ENCODE measurements at regions of chr21 and their contacts with region 1.

Region 1: GRCh38 chr21:33441489-33442477 is 38.0 kb downstream of the TMEM50B start:
- DNase-seq: no peak
- ATAC-seq: no peak
- H3K4me3 ChIP-seq: no peak overlapping the region
- H3K4me3 Mint-ChIP-seq: no peak overlapping the region
- H3K27ac ChIP-seq: no peak overlapping the region
- H3K27ac Mint-ChIP-seq: no peak overlapping the region
- H3K4me1 ChIP-seq: no peaks in the 10 kb centered on the region
- H3K4me1 Mint-ChIP-seq: peaks cover 5% of the 10 kb centered on the region
- H3K27me3 ChIP-seq: no peaks in the 10 kb centered on the region
- H3K27me3 Mint-ChIP-seq: no peaks in the 10 kb centered on the region
- CTCF ChIP-seq: no peak

Region 2: GRCh38 chr21:32900814-32901213 is 541.0 kb before region 1 on chr21:
- CTCF ChIA-PET with region 1: no interaction called
- POLR2A ChIA-PET with region 1: no interaction called
- intact Hi-C with region 1: no loop called
- DNase-seq: no peak
- ATAC-seq: no peak
- H3K4me3 ChIP-seq: no peak overlapping the region
- H3K4me3 Mint-ChIP-seq: no peak overlapping the region
- H3K27ac ChIP-seq: no peak overlapping the region
- H3K27ac Mint-ChIP-seq: no peak overlapping the region
- H3K4me1 ChIP-seq: no peaks in the 10 kb centered on the region
- H3K4me1 Mint-ChIP-seq: no peaks in the 10 kb centered on the region
- H3K27me3 ChIP-seq: no peaks in the 10 kb centered on the region
- H3K27me3 Mint-ChIP-seq: peaks cover 14% of the 10 kb centered on the region
- CTCF ChIP-seq: no peak

Region 3: DNA sequence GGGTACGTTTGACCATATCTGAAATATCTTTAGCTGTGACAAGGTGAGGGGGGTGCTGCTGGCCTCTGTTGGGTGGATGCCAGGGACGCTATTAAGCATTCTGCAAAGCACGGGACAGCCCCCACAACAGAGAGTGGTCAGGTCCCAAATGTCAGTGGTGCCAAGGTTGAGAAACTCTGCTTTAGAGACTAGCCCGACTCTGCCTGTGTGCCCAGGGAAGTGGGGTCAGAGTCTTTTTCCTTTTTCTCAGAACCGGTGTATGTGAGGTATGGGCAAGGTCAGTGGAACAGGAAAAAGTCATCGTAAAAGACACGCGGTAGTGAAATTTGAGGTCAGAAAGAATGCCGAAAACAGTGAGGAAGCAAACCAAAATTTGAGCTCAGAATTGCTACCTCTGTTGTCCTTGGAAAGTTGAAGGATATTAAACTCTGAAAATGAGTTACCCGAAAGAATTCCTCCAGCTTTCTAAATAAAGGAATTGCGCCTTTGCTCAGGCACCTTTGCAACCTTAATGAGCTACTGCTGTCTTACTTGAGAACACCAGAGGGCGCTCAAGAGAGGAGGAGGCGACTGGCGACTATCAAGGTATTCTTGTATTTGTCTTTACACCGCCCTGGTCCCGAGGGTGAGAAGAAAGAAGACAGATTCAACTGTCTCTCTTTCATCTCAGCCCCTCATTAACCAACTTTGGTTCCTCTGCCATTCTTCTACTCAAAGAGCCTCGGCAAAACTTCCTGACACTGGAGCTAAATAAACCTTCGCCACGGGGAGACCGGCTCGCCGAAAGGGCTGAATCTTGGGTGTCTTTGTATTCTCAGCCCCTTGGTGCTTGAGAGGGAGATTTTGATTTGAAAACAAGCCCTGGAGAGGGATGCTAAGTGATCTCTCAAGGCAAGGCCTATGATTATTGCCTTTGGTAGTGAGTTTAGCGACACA is 501.4 kb before region 1 on chr21:
- CTCF ChIA-PET with region 1: interaction called, 4 read pairs
- POLR2A ChIA-PET with region 1: no interaction called
- intact Hi-C with region 1: loop called in 1 of 2 experiments (anchors 1 kb)
- DNase-seq: peak in 12 of 14 experiments; percentile 7 to 79 (median 20)
- ATAC-seq: peak; percentile 61
- H3K4me3 ChIP-seq: no peak overlapping the region
- H3K4me3 Mint-ChIP-seq: no peak overlapping the region
- H3K27ac ChIP-seq: no peak overlapping the region
- H3K27ac Mint-ChIP-seq: no peak overlapping the region
- H3K4me1 ChIP-seq: no peaks in the 10 kb centered on the region
- H3K4me1 Mint-ChIP-seq: no peaks in the 10 kb centered on the region
- H3K27me3 ChIP-seq: no peaks in the 10 kb centered on the region
- H3K27me3 Mint-ChIP-seq: no peaks in the 10 kb centered on the region
- CTCF ChIP-seq: peak; percentile 82

Region 4: GRCh38 chr21:33266050-33266788 is 175.6 kb before region 1 on chr21 and contains the start of gene IL10RB:
- CTCF ChIA-PET with region 1: interaction called, 4 read pairs
- POLR2A ChIA-PET with region 1: no interaction called
- intact Hi-C with region 1: loop called in 1 of 2 experiments (anchors 10 kb)
- DNase-seq: peak; percentile 47 to 89 (median 72)
- ATAC-seq: peak; percentile 71
- H3K4me3 ChIP-seq: peak within 1 kb of the TSS; percentile 98
- H3K4me3 Mint-ChIP-seq: peak within 1 kb of the TSS; percentile 99
- H3K27ac ChIP-seq: peak within 1 kb of the TSS; percentile 79 to 85
- H3K27ac Mint-ChIP-seq: peak within 1 kb of the TSS; percentile 94
- H3K4me1 ChIP-seq: peaks cover 62% of the 10 kb centered on the region
- H3K4me1 Mint-ChIP-seq: peaks cover 60% of the 10 kb centered on the region
- H3K27me3 ChIP-seq: no peaks in the 10 kb centered on the region
- H3K27me3 Mint-ChIP-seq: no peaks in the 10 kb centered on the region
- CTCF ChIP-seq: no peak
- total RNA-seq, gene IL10RB: 7.2 to 9.2 TPM

Region 5: DNA sequence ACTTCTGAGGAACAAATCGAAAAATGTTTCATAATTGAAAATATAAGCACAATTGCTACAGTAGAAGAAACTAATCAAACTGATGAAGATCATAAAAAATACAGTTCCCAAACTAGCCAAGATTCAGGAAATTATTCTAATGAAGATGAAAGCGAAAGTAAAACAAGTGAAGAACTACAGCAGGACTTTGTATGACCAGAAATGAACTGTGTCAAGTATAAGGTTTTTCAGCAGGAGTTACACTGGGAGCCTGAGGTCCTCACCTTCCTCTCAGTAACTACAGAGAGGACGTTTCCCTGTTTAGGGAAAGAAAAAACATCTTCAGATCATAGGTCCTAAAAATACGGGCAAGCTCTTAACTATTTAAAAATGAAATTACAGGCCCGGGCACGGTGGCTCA is 86.4 kb before region 1 on chr21:
- CTCF ChIA-PET with region 1: interaction called, 24 read pairs
- POLR2A ChIA-PET with region 1: interaction called, 3 read pairs
- intact Hi-C with region 1: loop called in 1 of 2 experiments (anchors 5 kb)
- DNase-seq: no peak
- ATAC-seq: no peak
- H3K4me3 ChIP-seq: no peak overlapping the region
- H3K4me3 Mint-ChIP-seq: no peak overlapping the region
- H3K27ac ChIP-seq: no peak overlapping the region
- H3K27ac Mint-ChIP-seq: peak overlapping the region; percentile 31
- H3K4me1 ChIP-seq: no peaks in the 10 kb centered on the region
- H3K4me1 Mint-ChIP-seq: peaks cover 15% of the 10 kb centered on the region
- H3K27me3 ChIP-seq: no peaks in the 10 kb centered on the region
- H3K27me3 Mint-ChIP-seq: no peaks in the 10 kb centered on the region
- CTCF ChIP-seq: no peak

Region 6: GRCh38 chr21:33479679-33480480 is 38.1 kb after region 1 on chr21 and contains the start of gene TMEM50B:
- CTCF ChIA-PET with region 1: interaction called, 4 read pairs
- POLR2A ChIA-PET with region 1: interaction called, 11 read pairs
- intact Hi-C with region 1: no loop called
- DNase-seq: peak; percentile 91 to 99 (median 96)
- ATAC-seq: peak; percentile 89
- H3K4me3 ChIP-seq: peak within 1 kb of the TSS; percentile 88
- H3K4me3 Mint-ChIP-seq: peak within 1 kb of the TSS; percentile 89
- H3K27ac ChIP-seq: peak within 1 kb of the TSS; percentile 80 to 90
- H3K27ac Mint-ChIP-seq: peak within 1 kb of the TSS; percentile 96
- H3K4me1 ChIP-seq: peaks cover 22% of the 10 kb centered on the region
- H3K4me1 Mint-ChIP-seq: peaks cover 19% of the 10 kb centered on the region
- H3K27me3 ChIP-seq: no peaks in the 10 kb centered on the region
- H3K27me3 Mint-ChIP-seq: no peaks in the 10 kb centered on the region
- CTCF ChIP-seq: peak; percentile 0
- total RNA-seq, gene TMEM50B: 38.4 to 40.3 TPM